Activated CD4-positive, alpha-beta T cell treated with anti-CD3 and anti-CD28 coated beads for 36 hours (primary cell): ENCODE measurements at regions of chr12 and their contacts with region 1.

Region 1: GRCh38 chr12:59595883-59596540 is at the start of gene SLC16A7:
- DNase-seq: peak; percentile 91
- ATAC-seq: peak; percentile 54
- H3K4me3 Mint-ChIP-seq: peak within 1 kb of the TSS; percentile 82
- H3K27ac Mint-ChIP-seq: peak within 1 kb of the TSS; percentile 100
- H3K4me1 Mint-ChIP-seq: peaks cover 53% of the 10 kb centered on the region
- H3K27me3 Mint-ChIP-seq: no peaks in the 10 kb centered on the region
- total RNA-seq, gene SLC16A7: 33.0 to 34.8 TPM

Region 2: DNA sequence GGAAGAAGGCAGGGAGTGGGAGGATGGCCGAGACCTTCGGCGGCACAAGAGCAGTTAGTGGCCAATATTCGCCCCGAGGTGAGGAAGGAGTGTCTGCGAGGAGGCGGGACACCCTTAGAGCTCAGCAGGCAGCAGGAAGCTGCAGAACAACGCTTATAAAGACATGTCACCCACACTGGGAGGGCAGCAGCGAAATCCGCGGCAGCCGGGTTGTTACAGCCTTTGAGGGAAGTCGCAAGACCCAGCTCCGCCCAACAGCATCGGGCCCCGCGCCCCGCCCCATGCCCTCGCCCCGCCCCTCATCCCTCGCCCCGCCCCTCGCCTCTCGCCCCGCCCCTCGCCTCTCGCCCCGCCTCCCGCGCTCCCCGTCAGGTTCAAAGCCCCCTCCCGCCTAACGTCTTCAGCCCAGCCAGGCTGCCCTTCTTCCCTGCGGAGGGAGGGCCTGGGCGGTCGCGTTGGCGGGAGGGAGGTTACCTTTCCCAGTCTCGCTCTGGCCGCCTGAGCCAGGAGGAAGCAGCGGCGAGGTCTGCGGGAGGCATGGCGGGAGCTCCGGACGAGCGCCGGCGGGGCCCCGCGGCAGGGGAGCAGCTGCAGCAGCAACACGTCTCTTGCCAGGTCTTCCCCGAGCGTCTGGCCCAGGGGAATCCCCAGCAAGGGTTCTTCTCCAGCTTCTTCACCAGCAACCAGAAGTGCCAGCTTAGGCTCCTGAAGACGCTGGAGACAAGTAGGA is 1654.7 kb before region 1 on chr12 and contains the start of gene ATP23:
- CTCF ChIA-PET with region 1: no interaction called
- POLR2A ChIA-PET with region 1: no interaction called
- intact Hi-C with region 1: loop called (anchors 1 to 5 kb)
- DNase-seq: peak; percentile 94
- ATAC-seq: peak; percentile 90
- H3K4me3 Mint-ChIP-seq: peak within 1 kb of the TSS; percentile 77
- H3K27ac Mint-ChIP-seq: peak within 1 kb of the TSS; percentile 90
- H3K4me1 Mint-ChIP-seq: peaks cover 43% of the 10 kb centered on the region
- H3K27me3 Mint-ChIP-seq: no peaks in the 10 kb centered on the region
- total RNA-seq, gene ATP23: 17.8 to 17.9 TPM

Region 3: GRCh38 chr12:59403259-59403932 is 192.6 kb before region 1 on chr12:
- CTCF ChIA-PET with region 1: no interaction called
- POLR2A ChIA-PET with region 1: no interaction called
- intact Hi-C with region 1: loop called (anchors 5 to 10 kb)
- DNase-seq: peak; percentile 41
- ATAC-seq: peak; percentile 50
- H3K4me3 Mint-ChIP-seq: no peak overlapping the region
- H3K27ac Mint-ChIP-seq: no peak overlapping the region
- H3K4me1 Mint-ChIP-seq: peaks cover 9% of the 10 kb centered on the region
- H3K27me3 Mint-ChIP-seq: peaks cover 2% of the 10 kb centered on the region

Region 4: DNA sequence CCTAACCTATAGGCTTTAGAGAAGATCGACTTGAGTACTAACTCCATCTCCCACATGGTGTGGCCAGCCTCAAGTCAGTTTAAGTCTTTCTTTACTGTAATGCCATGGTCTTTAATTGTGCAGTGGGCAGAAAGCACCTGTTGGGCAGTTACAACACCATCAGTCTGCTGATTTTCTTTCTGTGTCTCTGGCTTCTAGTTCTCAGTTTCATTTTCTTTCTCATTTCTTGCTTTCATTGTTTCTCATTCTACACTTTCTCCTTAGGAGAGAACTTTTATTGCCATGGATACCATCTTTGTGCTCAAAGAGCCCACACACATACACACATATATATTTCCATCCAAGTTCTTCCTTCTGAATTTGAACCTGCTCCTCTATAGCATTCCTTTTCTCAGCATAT is 96.2 kb before region 1 on chr12:
- CTCF ChIA-PET with region 1: no interaction called
- POLR2A ChIA-PET with region 1: no interaction called
- intact Hi-C with region 1: loop called in 1 of 2 experiments (anchors 1 kb)
- DNase-seq: no peak
- ATAC-seq: peak; percentile 80
- H3K4me3 Mint-ChIP-seq: no peak overlapping the region
- H3K27ac Mint-ChIP-seq: no peak overlapping the region
- H3K4me1 Mint-ChIP-seq: peaks cover 18% of the 10 kb centered on the region
- H3K27me3 Mint-ChIP-seq: no peaks in the 10 kb centered on the region

Region 5: GRCh38 chr12:59615392-59616165 is 19.6 kb after region 1 on chr12:
- CTCF ChIA-PET with region 1: interaction called, 3 read pairs
- POLR2A ChIA-PET with region 1: no interaction called
- intact Hi-C with region 1: loop called in 1 of 2 experiments (anchors 2 kb)
- DNase-seq: no peak
- ATAC-seq: no peak
- H3K4me3 Mint-ChIP-seq: no peak overlapping the region
- H3K27ac Mint-ChIP-seq: no peak overlapping the region
- H3K4me1 Mint-ChIP-seq: peaks cover 40% of the 10 kb centered on the region
- H3K27me3 Mint-ChIP-seq: no peaks in the 10 kb centered on the region

Region 6: GRCh38 chr12:59627582-59627981 is 31.6 kb after region 1 on chr12:
- CTCF ChIA-PET with region 1: no interaction called
- POLR2A ChIA-PET with region 1: interaction called, 3 read pairs
- intact Hi-C with region 1: loop called in 1 of 2 experiments (anchors 1 kb)
- DNase-seq: no peak
- ATAC-seq: peak; percentile 55
- H3K4me3 Mint-ChIP-seq: no peak overlapping the region
- H3K27ac Mint-ChIP-seq: no peak overlapping the region
- H3K4me1 Mint-ChIP-seq: peaks cover 56% of the 10 kb centered on the region
- H3K27me3 Mint-ChIP-seq: no peaks in the 10 kb centered on the region

Region 7: DNA sequence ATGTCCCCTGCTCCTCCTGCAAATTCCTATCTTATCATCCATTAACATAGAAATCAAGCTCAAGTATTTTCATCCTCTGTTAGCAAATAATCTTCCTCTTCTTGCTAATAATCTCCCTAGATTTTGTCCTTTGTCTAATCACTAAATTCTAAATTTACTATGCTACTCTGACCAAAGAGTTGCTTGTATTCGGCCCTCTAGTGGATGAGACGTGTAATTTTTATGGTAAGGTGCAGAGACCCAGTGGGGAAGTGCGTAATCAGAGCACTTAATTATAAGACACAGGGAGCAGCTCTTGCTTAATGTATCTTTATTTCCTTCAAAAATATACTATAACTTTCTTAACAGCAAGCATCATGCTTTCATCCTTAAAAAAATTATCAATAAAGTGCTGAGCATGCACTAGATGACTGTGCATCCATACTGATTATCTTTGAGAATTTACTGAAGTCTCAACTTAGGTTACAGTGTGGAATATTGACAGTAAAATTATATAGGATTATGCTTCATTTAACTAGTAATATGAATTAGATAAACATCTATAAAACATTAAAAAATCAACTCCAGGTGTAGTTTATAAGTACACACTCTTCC is 212.4 kb after region 1 on chr12:
- CTCF ChIA-PET with region 1: interaction called, 4 read pairs
- POLR2A ChIA-PET with region 1: no interaction called
- intact Hi-C with region 1: loop called in 1 of 2 experiments (anchors 5 kb)
- DNase-seq: no peak
- ATAC-seq: peak; percentile 70
- H3K4me3 Mint-ChIP-seq: no peak overlapping the region
- H3K27ac Mint-ChIP-seq: no peak overlapping the region
- H3K4me1 Mint-ChIP-seq: no peaks in the 10 kb centered on the region
- H3K27me3 Mint-ChIP-seq: no peaks in the 10 kb centered on the region